Activated CD4-positive, alpha-beta memory T cell treated with anti-CD3 and anti-CD28 coated beads for 36 hours (primary cell): ENCODE measurements at regions of chr10 and their contacts with region 1.

Region 1: DNA sequence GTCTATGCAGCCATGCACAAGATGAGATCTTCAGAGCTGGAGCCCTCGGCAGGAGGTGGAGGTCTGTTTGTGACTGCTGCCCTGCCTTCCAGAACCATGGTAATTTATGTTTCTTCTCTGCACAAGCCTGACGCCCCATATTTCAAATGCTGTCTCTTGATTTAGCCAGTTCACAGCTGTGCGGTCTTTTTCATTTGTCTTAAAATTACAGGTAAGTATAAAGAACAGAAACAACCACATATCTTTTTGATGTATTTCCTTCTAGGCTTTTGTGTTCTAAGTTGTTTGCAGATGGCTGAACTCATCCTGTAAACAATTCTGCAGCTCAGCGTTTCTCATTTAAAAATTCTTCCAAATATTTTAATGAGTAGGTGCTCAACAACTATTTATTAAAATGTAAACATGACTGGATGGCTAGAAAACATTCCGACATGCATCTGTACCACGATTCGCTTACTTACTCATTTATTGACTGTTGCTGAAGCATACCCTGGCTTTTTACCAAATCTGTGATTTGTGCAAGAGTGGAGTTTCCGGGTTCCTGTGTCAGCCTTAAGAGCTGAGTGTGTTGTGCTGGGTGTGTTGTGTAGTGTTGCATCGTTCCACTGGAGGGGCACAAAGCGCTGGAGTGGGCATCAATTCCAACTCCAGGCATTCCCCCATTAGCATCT is 58.9 kb downstream of the PIP4K2A start:
- DNase-seq: peak; percentile 63
- H3K4me3 Mint-ChIP-seq: peak overlapping the region; percentile 60
- H3K27ac Mint-ChIP-seq: peak overlapping the region; percentile 84
- H3K4me1 Mint-ChIP-seq: peaks cover 95% of the 10 kb centered on the region
- H3K27me3 Mint-ChIP-seq: no peaks in the 10 kb centered on the region

Region 2: GRCh38 chr10:22251751-22252223 is 403.7 kb before region 1 on chr10:
- CTCF ChIA-PET with region 1: no interaction called
- POLR2A ChIA-PET with region 1: no interaction called
- intact Hi-C with region 1: loop called (anchors 10 kb)
- DNase-seq: peak; percentile 83
- H3K4me3 Mint-ChIP-seq: peak overlapping the region; percentile 83
- H3K27ac Mint-ChIP-seq: peak overlapping the region; percentile 97
- H3K4me1 Mint-ChIP-seq: peaks cover 42% of the 10 kb centered on the region
- H3K27me3 Mint-ChIP-seq: peaks cover 3% of the 10 kb centered on the region

Region 3: GRCh38 chr10:22445495-22445894 is 210.0 kb before region 1 on chr10:
- CTCF ChIA-PET with region 1: no interaction called
- POLR2A ChIA-PET with region 1: no interaction called
- intact Hi-C with region 1: no loop called
- DNase-seq: no peak
- H3K4me3 Mint-ChIP-seq: no peak overlapping the region
- H3K27ac Mint-ChIP-seq: no peak overlapping the region
- H3K4me1 Mint-ChIP-seq: peaks cover 2% of the 10 kb centered on the region
- H3K27me3 Mint-ChIP-seq: peaks cover 11% of the 10 kb centered on the region

Region 4: GRCh38 chr10:22573820-22574569 is 81.5 kb before region 1 on chr10:
- CTCF ChIA-PET with region 1: no interaction called
- POLR2A ChIA-PET with region 1: no interaction called
- intact Hi-C with region 1: loop called (anchors 2 kb)
- DNase-seq: peak; percentile 40
- H3K4me3 Mint-ChIP-seq: no peak overlapping the region
- H3K27ac Mint-ChIP-seq: peak overlapping the region; percentile 54
- H3K4me1 Mint-ChIP-seq: peaks cover 56% of the 10 kb centered on the region
- H3K27me3 Mint-ChIP-seq: no peaks in the 10 kb centered on the region

Region 5: GRCh38 chr10:22666287-22667092 is 11.0 kb after region 1 on chr10:
- CTCF ChIA-PET with region 1: interaction called, 5 read pairs
- POLR2A ChIA-PET with region 1: interaction called, 4 read pairs
- intact Hi-C with region 1: loop called (anchors 1 kb)
- DNase-seq: peak; percentile 71
- H3K4me3 Mint-ChIP-seq: peak overlapping the region; percentile 72
- H3K27ac Mint-ChIP-seq: peak overlapping the region; percentile 84
- H3K4me1 Mint-ChIP-seq: peaks cover 75% of the 10 kb centered on the region
- H3K27me3 Mint-ChIP-seq: no peaks in the 10 kb centered on the region

Region 6: GRCh38 chr10:22693371-22693784 is 37.9 kb after region 1 on chr10:
- CTCF ChIA-PET with region 1: interaction called, 3 read pairs
- POLR2A ChIA-PET with region 1: no interaction called
- intact Hi-C with region 1: loop called (anchors 1 kb)
- DNase-seq: peak; percentile 62
- H3K4me3 Mint-ChIP-seq: peak overlapping the region; percentile 55
- H3K27ac Mint-ChIP-seq: peak overlapping the region; percentile 95
- H3K4me1 Mint-ChIP-seq: peaks cover 93% of the 10 kb centered on the region
- H3K27me3 Mint-ChIP-seq: no peaks in the 10 kb centered on the region

Region 7: DNA sequence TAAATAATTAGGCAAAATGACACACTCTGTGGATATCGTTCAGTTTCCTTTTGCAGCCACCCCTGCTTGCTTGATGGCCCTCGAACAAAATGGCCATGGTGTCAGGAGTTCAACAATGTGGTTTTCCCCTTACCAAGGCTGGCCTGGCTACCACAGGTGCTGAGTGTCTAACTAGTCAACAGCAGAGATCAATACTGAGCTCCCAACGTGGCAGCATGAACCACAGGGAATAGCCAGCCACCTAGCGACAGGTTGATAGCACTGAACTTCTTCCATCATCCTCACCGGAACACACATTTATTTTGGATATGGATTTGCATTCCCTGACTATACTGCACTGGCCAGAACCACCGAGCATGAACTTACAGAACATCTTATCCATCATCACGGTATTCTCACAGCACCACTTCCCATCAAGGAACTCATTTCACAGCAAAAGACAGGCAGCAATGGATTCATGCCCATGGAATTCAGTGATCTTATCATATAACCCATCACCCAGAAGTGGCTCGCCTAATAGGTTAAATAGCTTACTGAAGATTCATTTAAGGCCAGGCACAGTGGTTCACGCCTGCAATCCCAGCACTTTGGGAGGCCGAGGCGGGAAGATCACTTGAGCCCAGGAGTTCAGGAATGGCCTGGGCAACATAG is 682.9 kb after region 1 on chr10:
- CTCF ChIA-PET with region 1: no interaction called
- POLR2A ChIA-PET with region 1: no interaction called
- intact Hi-C with region 1: loop called (anchors 10 kb)
- DNase-seq: no peak
- H3K4me3 Mint-ChIP-seq: no peak overlapping the region
- H3K27ac Mint-ChIP-seq: no peak overlapping the region
- H3K4me1 Mint-ChIP-seq: peaks cover 73% of the 10 kb centered on the region
- H3K27me3 Mint-ChIP-seq: no peaks in the 10 kb centered on the region